ENCODE measurements at regions of chr12 and their contacts with region 1.

Region 1: GRCh38 chr12:7188562-7189397 is 706 bp upstream of the PEX5 start:
- DNase-seq: peak; percentile 43 to 79 (median 58)
- ATAC-seq: peak; percentile 44
- H3K4me3 ChIP-seq: peak overlapping the region; percentile 91
- H3K4me3 Mint-ChIP-seq: peak overlapping the region; percentile 98
- H3K27ac ChIP-seq: peak overlapping the region; percentile 91 to 93
- H3K27ac Mint-ChIP-seq: peak overlapping the region; percentile 97
- H3K4me1 ChIP-seq: peaks cover 27% of the 10 kb centered on the region
- H3K4me1 Mint-ChIP-seq: peaks cover 46% of the 10 kb centered on the region
- H3K27me3 ChIP-seq: no peaks in the 10 kb centered on the region
- H3K27me3 Mint-ChIP-seq: no peaks in the 10 kb centered on the region
- CTCF ChIP-seq: peak; percentile 63

Region 2: DNA sequence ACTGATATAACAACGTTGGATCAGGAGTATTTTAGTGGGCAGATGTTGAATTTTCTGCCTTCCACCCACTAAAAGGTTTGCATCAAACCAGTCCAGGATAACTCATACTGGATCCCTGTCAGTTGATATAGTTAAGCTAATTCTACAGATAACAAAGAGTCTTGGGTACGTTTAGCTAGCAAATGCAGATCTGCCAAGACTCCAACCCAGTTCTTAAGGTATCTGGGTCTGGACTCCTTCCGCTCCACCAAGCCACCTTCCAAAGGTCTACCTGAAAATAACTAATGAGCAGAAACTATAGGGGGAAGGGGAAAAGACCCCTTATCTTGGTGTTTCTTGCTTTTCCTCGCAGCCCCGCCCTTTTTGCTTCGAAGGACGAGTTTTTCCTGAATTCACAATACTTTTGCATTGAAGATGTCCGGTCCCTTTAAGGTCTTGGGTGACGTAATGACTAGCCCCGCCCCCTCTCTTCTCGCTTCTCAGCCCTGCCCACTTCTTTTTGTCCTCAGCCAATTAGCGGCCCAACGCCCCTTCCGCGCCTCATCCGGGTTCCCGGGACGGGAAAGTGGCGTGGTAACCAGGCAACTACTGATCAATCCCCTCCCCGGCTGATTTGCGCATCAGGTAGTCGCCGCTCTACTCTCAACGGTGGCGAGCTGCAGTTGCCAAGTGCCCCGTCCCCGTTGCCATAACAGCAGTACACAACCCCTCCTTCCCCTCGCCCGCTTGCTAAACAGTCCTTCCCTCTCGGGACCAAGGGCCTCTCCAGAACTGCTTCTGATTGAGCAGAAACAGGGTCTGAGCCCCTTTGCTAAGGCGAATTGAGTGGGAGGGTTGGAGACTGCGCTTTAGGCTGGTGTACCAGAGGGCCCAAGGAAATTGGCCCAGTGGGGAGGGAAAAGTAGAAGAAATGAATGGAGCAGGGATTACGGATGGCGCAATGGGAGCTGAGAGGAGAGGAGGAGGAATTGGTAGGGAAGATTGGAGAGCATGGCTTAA is 284.2 kb before region 1 on chr12 and contains the start of gene LRRC23:
- CTCF ChIA-PET with region 1: no interaction called
- POLR2A ChIA-PET with region 1: no interaction called
- intact Hi-C with region 1: loop called in 1 of 2 experiments (anchors 10 kb)
- DNase-seq: peak; percentile 92 to 99 (median 96)
- ATAC-seq: peak; percentile 96
- H3K4me3 ChIP-seq: peak within 1 kb of the TSS; percentile 60
- H3K4me3 Mint-ChIP-seq: peak within 1 kb of the TSS; percentile 22
- H3K27ac ChIP-seq: peak within 1 kb of the TSS; percentile 81 to 94
- H3K27ac Mint-ChIP-seq: no peak within 1 kb of the TSS
- H3K4me1 ChIP-seq: peaks cover 21% of the 10 kb centered on the region
- H3K4me1 Mint-ChIP-seq: no peaks in the 10 kb centered on the region
- H3K27me3 ChIP-seq: no peaks in the 10 kb centered on the region
- H3K27me3 Mint-ChIP-seq: no peaks in the 10 kb centered on the region
- CTCF ChIP-seq: no peak
- total RNA-seq, gene LRRC23: 3.2 to 4.7 TPM

Region 3: DNA sequence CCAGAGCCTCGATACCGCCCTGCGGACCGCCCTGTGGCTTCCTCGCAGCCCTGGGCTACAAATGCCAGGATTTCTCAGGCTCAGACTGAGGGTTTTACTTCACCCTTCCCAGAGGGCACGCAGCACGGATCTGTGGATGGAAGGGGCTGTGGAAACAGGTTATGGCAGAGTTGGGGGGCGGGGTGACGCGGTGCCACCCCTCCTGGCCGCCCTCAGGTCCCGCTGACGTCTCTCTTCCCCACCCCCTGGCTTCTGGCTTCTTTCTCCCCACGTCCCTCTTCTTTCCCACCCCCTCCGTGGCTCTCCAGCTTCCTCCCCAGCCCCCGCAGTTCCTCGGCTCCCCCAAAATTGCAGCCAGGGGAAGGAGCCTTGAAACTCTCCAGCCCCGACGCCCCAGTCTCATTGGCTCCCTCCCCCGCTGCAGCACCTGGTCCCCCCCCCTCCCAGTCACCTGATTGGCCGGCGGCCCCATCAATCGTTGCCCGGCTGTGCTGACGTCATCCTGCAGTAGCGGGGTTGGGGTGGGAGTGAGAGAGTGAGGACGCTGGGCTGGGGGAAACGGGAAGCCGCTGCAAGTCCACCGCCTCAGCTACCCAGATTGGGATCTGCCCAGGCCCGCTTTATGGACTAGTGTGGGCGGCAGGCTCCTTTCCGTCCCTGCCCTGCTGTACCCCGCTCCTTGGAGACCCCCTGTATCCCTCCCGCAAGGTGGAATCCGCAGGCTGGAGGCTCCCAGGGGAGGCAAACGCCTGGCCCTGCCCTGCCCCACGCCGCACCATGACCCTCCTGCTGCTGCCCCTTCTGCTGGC is 58.7 kb before region 1 on chr12 and contains the start of gene CLSTN3:
- CTCF ChIA-PET with region 1: no interaction called
- POLR2A ChIA-PET with region 1: no interaction called
- intact Hi-C with region 1: loop called in 1 of 2 experiments (anchors 2 kb)
- DNase-seq: peak; percentile 77 to 94 (median 84)
- ATAC-seq: peak; percentile 89
- H3K4me3 ChIP-seq: peak within 1 kb of the TSS; percentile 88
- H3K4me3 Mint-ChIP-seq: peak within 1 kb of the TSS; percentile 91
- H3K27ac ChIP-seq: peak within 1 kb of the TSS; percentile 58 to 71
- H3K27ac Mint-ChIP-seq: peak within 1 kb of the TSS; percentile 87
- H3K4me1 ChIP-seq: peaks cover 33% of the 10 kb centered on the region
- H3K4me1 Mint-ChIP-seq: peaks cover 47% of the 10 kb centered on the region
- H3K27me3 ChIP-seq: no peaks in the 10 kb centered on the region
- H3K27me3 Mint-ChIP-seq: no peaks in the 10 kb centered on the region
- CTCF ChIP-seq: no peak
- total RNA-seq, gene CLSTN3: 29.1 to 33.9 TPM

Region 4: GRCh38 chr12:7142056-7142644 is 46.6 kb before region 1 on chr12:
- CTCF ChIA-PET with region 1: interaction called, 6 read pairs
- POLR2A ChIA-PET with region 1: no interaction called
- intact Hi-C with region 1: loop called (anchors 1 kb)
- DNase-seq: peak; percentile 20 to 70 (median 48)
- ATAC-seq: peak; percentile 90
- H3K4me3 ChIP-seq: no peak overlapping the region
- H3K4me3 Mint-ChIP-seq: no peak overlapping the region
- H3K27ac ChIP-seq: no peak overlapping the region
- H3K27ac Mint-ChIP-seq: no peak overlapping the region
- H3K4me1 ChIP-seq: no peaks in the 10 kb centered on the region
- H3K4me1 Mint-ChIP-seq: no peaks in the 10 kb centered on the region
- H3K27me3 ChIP-seq: no peaks in the 10 kb centered on the region
- H3K27me3 Mint-ChIP-seq: no peaks in the 10 kb centered on the region
- CTCF ChIP-seq: peak; percentile 48

Region 5: DNA sequence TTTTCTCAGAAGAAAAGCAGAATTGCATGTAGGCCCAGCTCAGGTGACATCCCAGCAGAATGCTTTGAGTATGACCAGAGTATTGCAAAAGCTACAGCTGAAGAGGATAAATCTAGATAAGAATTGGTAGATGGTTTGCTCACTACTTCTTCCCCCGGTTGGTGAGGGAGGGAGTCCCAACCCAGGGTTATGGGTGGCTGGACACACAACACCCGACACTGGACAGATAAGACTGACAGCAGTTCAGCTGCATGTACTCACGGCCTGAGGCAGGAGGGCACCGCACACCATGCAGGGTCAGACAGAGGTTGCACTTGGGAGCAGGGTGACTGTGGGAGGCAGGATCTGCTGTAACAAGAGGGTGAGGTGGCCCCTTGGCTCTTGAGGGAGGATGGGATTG is 560.1 kb after region 1 on chr12:
- CTCF ChIA-PET with region 1: no interaction called
- POLR2A ChIA-PET with region 1: no interaction called
- intact Hi-C with region 1: no loop called
- DNase-seq: no peak
- ATAC-seq: no peak
- H3K4me3 ChIP-seq: no peak overlapping the region
- H3K4me3 Mint-ChIP-seq: no peak overlapping the region
- H3K27ac ChIP-seq: no peak overlapping the region
- H3K27ac Mint-ChIP-seq: no peak overlapping the region
- H3K4me1 ChIP-seq: no peaks in the 10 kb centered on the region
- H3K4me1 Mint-ChIP-seq: no peaks in the 10 kb centered on the region
- H3K27me3 ChIP-seq: no peaks in the 10 kb centered on the region
- H3K27me3 Mint-ChIP-seq: no peaks in the 10 kb centered on the region
- CTCF ChIP-seq: no peak

Measured in CD4-positive, alpha-beta T cell (primary cell).